Endothelial cell of umbilical vein (primary cell): ENCODE measurements at regions of chr15 and their contacts with region 1.

Region 1: DNA sequence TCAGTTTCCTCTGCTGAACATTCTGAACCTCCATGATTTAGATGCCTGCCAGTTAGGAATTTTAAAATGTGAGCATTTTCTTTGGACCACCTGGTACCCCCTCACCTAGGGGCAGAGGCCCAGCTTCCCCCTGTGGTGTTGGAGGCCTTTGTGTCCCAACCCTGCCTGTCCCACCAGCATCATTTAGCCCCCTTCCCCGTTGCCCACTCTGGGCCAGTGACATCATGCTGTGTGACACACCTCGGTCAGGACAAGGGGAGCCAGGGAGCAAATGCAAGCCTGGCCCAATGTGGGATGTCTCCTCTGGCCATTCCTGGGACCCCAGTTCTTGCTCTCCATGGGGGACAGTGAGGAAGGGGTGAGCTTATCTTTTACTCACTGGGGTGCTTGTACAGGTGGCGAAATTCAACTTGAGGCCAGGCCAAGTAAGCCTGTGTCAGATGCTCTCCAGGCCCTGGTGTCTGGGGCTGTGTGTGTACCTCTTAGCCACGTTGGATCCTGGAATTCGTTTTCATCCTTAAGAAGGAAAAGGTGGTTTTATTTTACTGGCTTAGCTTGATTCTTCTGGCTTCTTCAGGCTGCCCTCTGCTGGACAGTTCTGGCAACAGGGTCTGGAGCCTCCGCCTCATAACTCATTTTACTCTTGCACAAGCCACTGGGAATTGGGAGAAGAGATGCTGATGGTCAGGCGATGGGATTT is 49.7 kb upstream of the MYZAP start:
- DNase-seq: peak; percentile 77
- H3K4me3 ChIP-seq: no peak overlapping the region
- H3K27ac ChIP-seq: no peak overlapping the region
- H3K4me1 ChIP-seq: peaks cover 6% of the 10 kb centered on the region
- H3K27me3 ChIP-seq: no peaks in the 10 kb centered on the region
- CTCF ChIP-seq: peak; percentile 82 to 91
- POLR2A ChIP-seq: no peak

Region 2: GRCh38 chr15:57551717-57552677 is 10.0 kb after region 1 on chr15:
- CTCF ChIA-PET with region 1: interaction called, 72 read pairs
- POLR2A ChIA-PET with region 1: no interaction called
- dilution Hi-C with region 1: no loop called
- intact Hi-C with region 1: no loop called
- DNase-seq: peak; percentile 88
- H3K4me3 ChIP-seq: peak overlapping the region in 1 of 3 experiments; percentile 0
- H3K27ac ChIP-seq: peak overlapping the region; percentile 94
- H3K4me1 ChIP-seq: peaks cover 61% of the 10 kb centered on the region
- H3K27me3 ChIP-seq: no peaks in the 10 kb centered on the region
- CTCF ChIP-seq: no peak
- POLR2A ChIP-seq: peak; percentile 11